ENCODE measurements at regions of chr3 and their contacts with region 1.

Region 1: DNA sequence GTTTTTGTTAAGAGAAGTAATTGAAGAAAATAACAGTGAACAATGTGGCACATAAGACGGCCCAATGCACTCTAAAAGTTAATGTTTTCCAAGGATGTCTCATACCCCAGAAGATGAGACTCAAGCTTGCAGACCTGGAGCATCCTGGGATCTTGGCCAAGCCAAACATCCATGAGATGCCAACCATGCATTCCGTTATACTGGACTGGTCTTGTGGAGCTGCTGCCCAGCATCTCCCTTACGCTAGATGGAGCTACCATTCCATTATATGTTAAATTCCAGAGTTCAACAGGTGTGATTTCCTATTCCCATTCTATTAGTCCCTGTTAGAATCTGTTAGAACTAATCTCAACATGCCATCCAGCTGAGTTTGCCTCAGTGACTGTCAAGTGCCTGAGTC is 181.8 kb downstream of the PDCD6IP start:
- DNase-seq: peak; percentile 63
- H3K4me3 ChIP-seq: no peak overlapping the region
- H3K27ac ChIP-seq: no peak overlapping the region
- H3K4me1 ChIP-seq: no peaks in the 10 kb centered on the region
- H3K27me3 ChIP-seq: no peaks in the 10 kb centered on the region
- CTCF ChIP-seq: peak; percentile 83 to 85

Region 2: GRCh38 chr3:33883538-33883950 is 96.7 kb before region 1 on chr3:
- CTCF ChIA-PET with region 1: interaction called, 3 read pairs
- dilution Hi-C with region 1: no loop called
- in situ Hi-C with region 1: no loop called
- intact Hi-C with region 1: loop called (anchors 1 kb)
- DNase-seq: peak; percentile 16
- H3K4me3 ChIP-seq: no peak overlapping the region
- H3K27ac ChIP-seq: no peak overlapping the region
- H3K4me1 ChIP-seq: peaks cover 14% of the 10 kb centered on the region
- H3K27me3 ChIP-seq: no peaks in the 10 kb centered on the region
- CTCF ChIP-seq: peak; percentile 69 to 73

Region 3: GRCh38 chr3:34020726-34021680 is 40.8 kb after region 1 on chr3:
- CTCF ChIA-PET with region 1: no interaction called
- dilution Hi-C with region 1: no loop called
- in situ Hi-C with region 1: no loop called
- intact Hi-C with region 1: loop called (anchors 5 kb)
- DNase-seq: no peak
- H3K4me3 ChIP-seq: no peak overlapping the region
- H3K27ac ChIP-seq: no peak overlapping the region
- H3K4me1 ChIP-seq: peaks cover 17% of the 10 kb centered on the region
- H3K27me3 ChIP-seq: no peaks in the 10 kb centered on the region
- CTCF ChIP-seq: no peak

Region 4: DNA sequence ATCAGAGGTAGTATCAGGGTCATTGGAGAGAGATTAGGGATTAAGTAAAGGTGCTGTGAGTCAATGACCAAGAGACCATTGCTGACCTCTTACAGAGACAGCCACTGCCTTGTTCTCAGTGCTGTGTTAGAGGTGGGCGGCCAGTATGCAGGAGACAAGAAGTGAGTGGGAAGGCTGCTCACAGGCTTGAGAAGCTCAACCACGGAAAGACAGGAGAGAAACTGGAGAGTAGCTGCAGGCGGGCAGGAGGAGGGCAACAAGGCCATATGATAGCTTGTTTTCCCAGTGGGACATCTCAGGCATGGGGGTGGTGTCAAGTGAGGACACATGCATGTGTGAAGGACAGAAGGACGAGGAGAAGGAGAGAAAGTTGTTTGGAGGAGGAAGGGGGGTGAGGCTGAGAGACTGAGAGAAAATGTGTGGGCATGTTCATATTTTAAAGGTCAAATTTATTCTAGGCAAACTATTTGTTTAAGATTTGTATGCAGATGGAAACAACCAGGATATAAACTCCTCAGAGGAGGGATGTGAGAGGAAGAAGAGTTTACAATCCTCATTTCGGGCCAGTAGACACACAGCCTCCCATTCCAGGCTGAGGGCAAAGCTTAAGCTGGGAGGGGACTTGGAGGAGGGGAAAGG is 55.6 kb after region 1 on chr3:
- CTCF ChIA-PET with region 1: no interaction called
- dilution Hi-C with region 1: no loop called
- in situ Hi-C with region 1: no loop called
- intact Hi-C with region 1: no loop called
- DNase-seq: no peak
- H3K4me3 ChIP-seq: no peak overlapping the region
- H3K27ac ChIP-seq: no peak overlapping the region
- H3K4me1 ChIP-seq: no peaks in the 10 kb centered on the region
- H3K27me3 ChIP-seq: peaks cover 3% of the 10 kb centered on the region
- CTCF ChIP-seq: no peak

Region 5: DNA sequence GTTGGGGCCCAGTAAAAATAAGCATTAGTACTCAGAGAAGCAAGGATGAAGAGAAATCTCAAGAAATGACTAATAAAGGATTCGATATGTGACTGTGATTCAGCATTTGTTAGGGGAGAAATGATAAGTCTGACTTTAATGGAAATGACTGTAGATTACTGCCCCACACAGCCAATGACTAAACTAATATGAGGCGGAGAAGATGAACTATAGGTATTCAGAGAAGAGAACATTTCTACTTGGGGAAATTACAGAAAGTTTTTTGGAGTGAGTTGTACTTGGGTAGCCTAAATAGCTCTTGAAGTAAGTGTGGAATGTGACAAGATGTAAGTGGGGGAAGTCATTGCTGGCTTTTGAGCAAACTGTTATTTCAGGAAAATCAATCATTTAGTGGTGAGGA is 198.2 kb after region 1 on chr3:
- CTCF ChIA-PET with region 1: no interaction called
- dilution Hi-C with region 1: no loop called
- in situ Hi-C with region 1: no loop called
- intact Hi-C with region 1: no loop called
- DNase-seq: no peak
- H3K4me3 ChIP-seq: no peak overlapping the region
- H3K27ac ChIP-seq: no peak overlapping the region
- H3K4me1 ChIP-seq: no peaks in the 10 kb centered on the region
- H3K27me3 ChIP-seq: no peaks in the 10 kb centered on the region
- CTCF ChIP-seq: no peak

Region 6: GRCh38 chr3:34260271-34261006 is 280.2 kb after region 1 on chr3:
- CTCF ChIA-PET with region 1: interaction called, 3 read pairs
- dilution Hi-C with region 1: no loop called
- in situ Hi-C with region 1: no loop called
- intact Hi-C with region 1: loop called (anchors 2 kb)
- DNase-seq: peak; percentile 6
- H3K4me3 ChIP-seq: no peak overlapping the region
- H3K27ac ChIP-seq: no peak overlapping the region
- H3K4me1 ChIP-seq: no peaks in the 10 kb centered on the region
- H3K27me3 ChIP-seq: no peaks in the 10 kb centered on the region
- CTCF ChIP-seq: peak; percentile 57 to 71

Region 7: DNA sequence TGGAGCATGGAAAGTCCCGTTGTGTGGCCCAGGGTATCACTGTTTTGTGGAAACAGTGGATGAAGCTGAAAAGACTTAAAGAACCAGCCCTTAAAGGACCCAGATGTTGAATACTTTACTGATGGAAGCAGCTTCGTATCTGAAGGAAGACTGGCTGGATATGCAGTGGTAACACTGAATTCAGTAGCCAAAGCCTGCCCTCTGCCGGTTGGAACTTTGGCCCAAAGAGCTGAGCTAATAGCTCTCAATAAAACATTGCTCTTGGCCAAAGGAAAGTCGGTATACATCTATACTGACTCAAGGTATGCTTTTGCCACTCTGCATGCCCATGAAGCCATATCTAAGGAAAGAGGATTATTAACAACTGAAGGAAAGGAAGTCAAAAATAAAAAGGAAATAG is 703.6 kb after region 1 on chr3:
- CTCF ChIA-PET with region 1: interaction called, 16 read pairs
- dilution Hi-C with region 1: no loop called
- in situ Hi-C with region 1: loop called in 1 of 2 experiments (anchors 25 kb)
- intact Hi-C with region 1: loop called (anchors 1 kb)
- DNase-seq: peak; percentile 34
- H3K4me3 ChIP-seq: no peak overlapping the region
- H3K27ac ChIP-seq: no peak overlapping the region
- H3K4me1 ChIP-seq: no peaks in the 10 kb centered on the region
- H3K27me3 ChIP-seq: no peaks in the 10 kb centered on the region
- CTCF ChIP-seq: peak in 1 of 2 donors; percentile 26

Region 8: GRCh38 chr3:34858067-34858660 is 877.9 kb after region 1 on chr3:
- CTCF ChIA-PET with region 1: no interaction called
- dilution Hi-C with region 1: no loop called
- in situ Hi-C with region 1: no loop called
- intact Hi-C with region 1: no loop called
- DNase-seq: no peak
- H3K4me3 ChIP-seq: no peak overlapping the region
- H3K27ac ChIP-seq: no peak overlapping the region
- H3K4me1 ChIP-seq: no peaks in the 10 kb centered on the region
- H3K27me3 ChIP-seq: no peaks in the 10 kb centered on the region
- CTCF ChIP-seq: no peak

Region 9: DNA sequence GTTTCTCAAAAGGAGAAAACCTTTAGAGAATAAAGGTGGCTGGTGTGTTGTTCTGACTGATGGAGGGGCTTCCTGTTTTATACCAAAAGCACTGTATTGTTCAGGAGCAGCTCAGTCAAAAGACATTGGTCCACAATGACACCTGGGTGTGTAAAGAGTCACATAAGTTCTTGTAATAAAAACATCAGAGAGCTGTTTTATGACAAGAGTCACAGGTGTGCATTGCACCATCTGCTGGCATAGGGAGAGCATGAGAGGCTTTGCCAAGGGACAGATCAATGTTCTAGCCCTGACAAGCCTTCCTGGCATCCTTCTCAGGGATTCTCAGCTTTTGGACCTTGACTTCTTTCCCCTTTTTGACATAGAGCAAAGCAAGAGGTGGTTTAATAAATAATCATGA is 1679.5 kb after region 1 on chr3:
- CTCF ChIA-PET with region 1: no interaction called
- dilution Hi-C with region 1: no loop called
- in situ Hi-C with region 1: no loop called
- intact Hi-C with region 1: loop called (anchors 1 kb)
- DNase-seq: peak; percentile 9
- H3K4me3 ChIP-seq: no peak overlapping the region
- H3K27ac ChIP-seq: no peak overlapping the region
- H3K4me1 ChIP-seq: no peaks in the 10 kb centered on the region
- H3K27me3 ChIP-seq: no peaks in the 10 kb centered on the region
- CTCF ChIP-seq: peak; percentile 30 to 70

Region 10: DNA sequence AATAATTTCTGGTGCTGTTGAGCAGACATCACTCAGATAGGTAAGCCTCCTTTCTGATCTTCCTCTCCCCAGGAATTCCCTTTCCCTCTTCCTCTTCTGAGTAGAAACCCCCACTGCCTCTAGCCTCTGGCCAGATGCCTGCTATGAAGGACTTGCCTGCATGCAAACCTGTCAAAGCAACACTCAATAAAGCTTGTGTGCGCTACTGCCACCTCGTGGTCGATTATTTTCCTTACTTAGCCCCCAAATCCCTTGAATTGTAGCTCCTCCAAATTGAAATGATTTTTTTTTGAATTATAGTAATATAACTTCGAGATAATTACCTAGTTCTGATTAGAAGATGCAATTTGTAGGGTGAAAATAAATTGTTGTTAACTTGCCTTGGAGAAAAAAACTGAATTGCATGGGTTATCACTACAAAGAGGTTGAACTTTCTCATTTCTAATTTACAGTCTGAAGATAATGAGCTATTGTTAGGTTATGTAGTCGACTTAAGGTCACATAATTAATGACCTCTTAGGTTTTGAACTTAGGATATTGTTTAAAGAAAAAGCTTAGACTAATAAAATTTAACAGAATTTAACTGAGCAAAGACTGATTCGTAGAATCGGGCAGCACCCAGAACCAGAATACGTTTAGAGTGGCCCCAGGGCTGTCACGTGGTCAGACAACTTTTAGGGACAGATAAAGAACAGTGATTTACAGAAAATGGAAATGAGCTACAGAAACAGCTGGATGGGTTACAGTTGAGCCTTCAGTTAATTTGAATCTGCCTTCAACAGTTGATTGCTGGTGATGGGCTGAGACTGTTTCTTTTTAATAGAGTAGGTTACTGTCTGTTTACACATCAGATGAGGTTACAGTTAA is 1928.3 kb after region 1 on chr3:
- CTCF ChIA-PET with region 1: no interaction called
- dilution Hi-C with region 1: no loop called
- in situ Hi-C with region 1: no loop called
- intact Hi-C with region 1: loop called (anchors 2 kb)
- DNase-seq: peak; percentile 41
- H3K4me3 ChIP-seq: no peak overlapping the region
- H3K27ac ChIP-seq: no peak overlapping the region
- H3K4me1 ChIP-seq: no peaks in the 10 kb centered on the region
- H3K27me3 ChIP-seq: no peaks in the 10 kb centered on the region
- CTCF ChIP-seq: peak; percentile 79 to 82

Measured in mammary epithelial cell (primary cell).